Right ventricle myocardium superior (tissue), 1 donor: ENCODE measurements at regions of chr16 and their contacts with region 1.

Region 1: GRCh38 chr16:56191156-56191815 is at the start of gene GNAO1:
- DNase-seq: peak; percentile 84
- ATAC-seq: peak; percentile 87
- total RNA-seq, gene GNAO1: 25.9 TPM

Region 2: GRCh38 chr16:55912022-55912421 is 279.3 kb before region 1 on chr16:
- intact Hi-C with region 1: no loop called
- DNase-seq: peak; percentile 67
- ATAC-seq: peak; percentile 90

Region 3: DNA sequence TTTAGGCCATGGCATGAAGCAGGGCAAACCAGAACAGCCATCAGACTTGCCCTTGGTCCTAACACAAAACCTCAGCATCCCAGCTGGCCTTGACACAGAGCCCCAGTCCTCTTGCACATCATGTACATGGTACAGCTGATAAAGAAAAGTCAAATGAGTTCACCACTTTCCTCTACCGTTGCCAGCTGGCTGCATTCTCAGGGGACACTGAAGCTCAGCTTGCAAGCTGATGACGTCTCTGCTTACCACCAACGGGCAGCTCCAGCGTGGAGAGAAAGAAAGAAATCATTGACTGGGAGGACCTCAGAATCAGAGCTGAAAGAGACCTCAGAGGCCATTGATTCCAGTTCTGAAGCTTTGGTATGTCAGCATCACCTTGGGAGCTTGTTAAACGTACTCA is 235.4 kb before region 1 on chr16:
- intact Hi-C with region 1: loop called (anchors 5 kb)
- DNase-seq: peak; percentile 85
- ATAC-seq: peak; percentile 97

Region 4: DNA sequence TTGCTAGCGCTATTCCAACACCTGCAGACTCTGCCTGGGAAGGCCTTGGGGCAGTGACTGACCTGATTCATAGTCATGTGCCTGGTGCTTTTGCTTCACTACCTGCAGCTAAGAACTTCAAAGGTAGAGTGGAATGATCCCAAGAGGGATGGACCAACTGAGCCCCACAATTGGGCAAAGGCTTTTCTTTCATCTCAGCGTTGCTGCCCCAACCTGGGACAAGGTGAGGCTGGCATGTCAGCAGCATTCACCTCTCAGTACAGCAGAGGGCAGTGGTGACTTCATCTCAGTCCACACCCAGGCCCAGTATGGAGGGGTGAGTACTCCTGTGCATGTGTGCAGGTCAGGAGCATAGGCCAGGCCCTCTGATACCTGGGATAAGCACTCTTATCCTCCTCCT is 149.6 kb before region 1 on chr16:
- intact Hi-C with region 1: loop called (anchors 10 kb)
- DNase-seq: no peak
- ATAC-seq: peak; percentile 93

Region 5: DNA sequence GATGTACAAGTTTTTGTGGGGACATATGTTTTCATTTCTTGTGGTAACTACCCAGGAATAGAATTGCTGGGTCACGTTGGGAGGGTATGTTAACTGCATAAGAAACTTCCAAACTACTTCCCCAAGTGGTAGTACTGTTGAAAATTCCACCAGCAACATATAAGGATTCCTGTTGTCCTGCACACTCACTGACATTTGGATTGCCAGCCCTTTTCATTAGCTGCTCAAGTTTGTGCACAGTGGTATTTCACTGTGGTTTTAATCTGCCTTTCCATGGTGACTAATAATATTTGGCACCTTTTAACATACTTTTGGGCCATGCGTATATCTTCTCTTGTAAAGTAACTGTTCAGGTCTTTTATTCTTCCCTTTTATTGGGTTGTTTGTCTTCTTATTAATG is 103.3 kb after region 1 on chr16:
- intact Hi-C with region 1: no loop called
- DNase-seq: no peak
- ATAC-seq: peak; percentile 68